ENCODE measurements at regions of chr4 and their contacts with region 1.

Region 1: GRCh38 chr4:6974138-6974848 is 64.7 kb downstream of the TBC1D14 start:
- DNase-seq: peak; percentile 87 to 95
- H3K4me3 ChIP-seq: no peak overlapping the region
- H3K27ac ChIP-seq: 0 out of 2 replicates have a peak overlapping the region, but pooled peaks have one; percentile 8
- H3K4me1 ChIP-seq: peaks cover 15 to 23% (median 19%) of the 10 kb centered on the region in 4 experiments; a peak in 6 of 7 replicates
- H3K27me3 ChIP-seq: no peaks in the 10 kb centered on the region
- CTCF ChIP-seq: peak; percentile 73 to 98 (median 75)
- EP300 ChIP-seq: no peak
- POLR2A ChIP-seq: no peak
- RAD21 ChIP-seq: peak; percentile 58 to 77

Region 2: GRCh38 chr4:6834867-6835266 is 139.4 kb before region 1 on chr4:
- CTCF ChIA-PET with region 1: no interaction called
- POLR2A ChIA-PET with region 1: no interaction called
- DNase-seq: no peak
- H3K4me3 ChIP-seq: no peak overlapping the region
- H3K27ac ChIP-seq: no peak overlapping the region
- H3K4me1 ChIP-seq: peaks cover 0 to 5% (median 2%) of the 10 kb centered on the region in 4 experiments; a peak in 4 of 7 replicates
- H3K27me3 ChIP-seq: peaks cover 0 to under 1% (median 0%) of the 10 kb centered on the region in 4 experiments; a peak in 1 of 7 replicates
- CTCF ChIP-seq: no peak
- EP300 ChIP-seq: no peak
- POLR2A ChIP-seq: no peak
- RAD21 ChIP-seq: no peak

Region 3: GRCh38 chr4:6909073-6909965 is 65.0 kb before region 1 on chr4 and contains the start of gene TBC1D14:
- CTCF ChIA-PET with region 1: interaction called, 28 read pairs
- POLR2A ChIA-PET with region 1: interaction called, 6 read pairs
- DNase-seq: peak in 1 of 2 experiments; percentile 91
- H3K4me3 ChIP-seq: peak within 1 kb of the TSS; percentile 58 to 92 (median 75)
- H3K27ac ChIP-seq: peak within 1 kb of the TSS; percentile 94; the same call in 1 of the 2 replicates
- H3K4me1 ChIP-seq: peaks cover 3 to 25% (median 11%) of the 10 kb centered on the region in 4 experiments
- H3K27me3 ChIP-seq: peaks cover 0 to 14% (median 5%) of the 10 kb centered on the region in 4 experiments; a peak in 4 of 7 replicates
- CTCF ChIP-seq: no peak; a peak in 1 of 4 replicates
- EP300 ChIP-seq: no peak
- POLR2A ChIP-seq: peak in 1 of 2 experiments; percentile 70; a peak in 2 of 3 replicates
- RAD21 ChIP-seq: peak; percentile 1 to 14; a peak in 1 of 4 replicates
- total RNA-seq, gene TBC1D14: 48.2 and 49.7 TPM in 2 replicates

Region 4: GRCh38 chr4:6942238-6942800 is 32.0 kb before region 1 on chr4:
- CTCF ChIA-PET with region 1: interaction called, 13 read pairs
- POLR2A ChIA-PET with region 1: interaction called, 4 read pairs
- DNase-seq: no peak
- H3K4me3 ChIP-seq: no peak overlapping the region
- H3K27ac ChIP-seq: no peak overlapping the region
- H3K4me1 ChIP-seq: peaks cover 16 to 52% (median 36%) of the 10 kb centered on the region in 4 experiments
- H3K27me3 ChIP-seq: no peaks in the 10 kb centered on the region
- CTCF ChIP-seq: no peak
- EP300 ChIP-seq: no peak
- POLR2A ChIP-seq: no peak
- RAD21 ChIP-seq: no peak

Region 5: GRCh38 chr4:6963139-6963611 is 11.1 kb before region 1 on chr4:
- CTCF ChIA-PET with region 1: interaction called, 31 read pairs
- POLR2A ChIA-PET with region 1: interaction called, 29 read pairs
- DNase-seq: no peak
- H3K4me3 ChIP-seq: no peak overlapping the region
- H3K27ac ChIP-seq: no peak overlapping the region
- H3K4me1 ChIP-seq: peaks cover 0 to 29% (median 25%) of the 10 kb centered on the region in 4 experiments; a peak in 6 of 7 replicates
- H3K27me3 ChIP-seq: no peaks in the 10 kb centered on the region
- CTCF ChIP-seq: no peak
- EP300 ChIP-seq: no peak
- POLR2A ChIP-seq: no peak
- RAD21 ChIP-seq: no peak

Region 6: DNA sequence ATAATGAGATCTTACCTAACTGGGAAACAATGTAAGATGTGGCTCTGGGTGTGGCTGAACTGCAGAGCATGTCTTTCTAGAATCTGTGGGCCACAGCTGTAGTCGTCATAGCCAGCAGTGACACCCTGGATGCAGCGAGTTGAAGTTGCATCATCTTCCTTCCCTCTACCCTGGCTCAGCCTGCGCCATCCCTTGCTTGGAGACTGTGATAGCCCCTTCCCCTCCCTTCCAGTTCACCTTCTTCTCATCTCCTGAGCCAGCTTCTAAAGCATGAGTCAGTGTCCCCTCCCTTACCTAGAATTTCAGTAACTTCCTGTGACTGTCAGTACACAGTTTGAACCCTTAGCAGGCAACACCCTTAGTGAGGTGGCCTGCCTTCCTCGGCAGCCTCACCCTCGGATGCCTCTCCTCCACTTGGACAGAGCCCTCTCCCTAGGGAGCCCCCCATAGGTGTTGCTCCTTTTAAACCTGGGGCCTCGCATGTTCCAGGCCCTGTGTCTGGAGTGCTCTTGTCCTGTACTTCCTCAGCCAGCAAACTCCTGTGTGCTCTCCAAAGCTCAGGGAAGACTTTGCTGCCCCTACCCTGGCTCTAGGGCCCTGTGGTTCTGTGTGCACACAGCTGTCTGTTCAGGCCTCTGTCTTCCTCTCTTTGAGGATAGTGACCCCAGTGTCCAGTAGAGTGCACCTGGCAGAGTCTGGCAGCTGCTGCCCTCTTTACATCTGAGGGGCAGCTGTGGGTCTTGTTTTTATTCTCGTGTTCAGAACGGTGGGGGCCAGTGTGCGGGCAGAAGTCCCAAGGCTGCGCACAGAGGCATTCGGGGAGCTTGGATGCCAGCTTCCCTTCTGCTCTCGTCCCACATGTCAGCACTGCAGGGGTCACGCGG is 25.1 kb after region 1 on chr4:
- CTCF ChIA-PET with region 1: interaction called, 14 read pairs
- POLR2A ChIA-PET with region 1: no interaction called
- DNase-seq: no peak
- H3K4me3 ChIP-seq: no peak overlapping the region
- H3K27ac ChIP-seq: no peak overlapping the region
- H3K4me1 ChIP-seq: no peaks in the 10 kb centered on the region
- H3K27me3 ChIP-seq: no peaks in the 10 kb centered on the region
- CTCF ChIP-seq: no peak
- EP300 ChIP-seq: no peak
- POLR2A ChIP-seq: no peak
- RAD21 ChIP-seq: no peak